ENCODE measurements at regions of chr5 and their contacts with region 1.

Region 1: DNA sequence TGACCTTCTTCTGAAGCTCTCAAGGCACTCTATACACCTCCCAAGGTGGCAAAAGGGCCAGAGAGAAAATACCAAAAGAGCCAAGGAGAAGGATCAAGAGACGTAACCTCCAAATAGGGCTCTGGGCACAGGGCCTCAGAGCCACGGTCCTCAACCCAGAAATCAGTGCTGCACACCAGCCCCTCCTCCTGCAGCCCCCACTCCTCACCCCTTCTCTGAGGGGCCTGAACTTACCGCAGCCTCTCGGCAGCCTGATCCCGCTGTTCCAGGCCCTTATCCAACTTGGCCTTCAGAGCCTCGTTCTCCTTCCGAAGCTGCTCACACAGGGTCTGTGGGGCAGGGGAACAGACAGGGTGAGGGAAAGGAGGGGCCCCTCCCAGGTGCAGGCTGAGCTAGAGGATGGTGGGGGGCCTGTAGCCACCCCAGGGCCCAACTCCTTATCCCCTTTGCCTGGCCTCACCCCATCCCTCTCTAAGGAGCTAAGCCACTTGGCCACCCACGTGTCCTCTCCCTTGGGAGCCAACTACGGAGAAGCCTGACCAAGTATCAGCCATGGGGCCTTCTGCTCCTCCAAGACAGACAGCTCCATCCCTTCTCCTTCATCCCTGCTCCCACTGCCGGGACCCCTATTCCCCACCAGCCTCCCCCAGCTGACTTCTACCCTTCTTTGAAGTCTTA is 28.8 kb downstream of the TNIP1 start:
- DNase-seq: no peak
- H3K4me3 ChIP-seq: no peak overlapping the region
- H3K27ac ChIP-seq: peak overlapping the region in 1 of 2 donors; percentile 44
- H3K4me1 ChIP-seq: no peaks in the 10 kb centered on the region
- H3K27me3 ChIP-seq: no peaks in the 10 kb centered on the region
- CTCF ChIP-seq: no peak
- POLR2A ChIP-seq: no peak

Region 2: GRCh38 chr5:151107738-151108508 is 55.9 kb after region 1 on chr5:
- intact Hi-C with region 1: loop called (anchors 2 kb)
- DNase-seq: peak; percentile 58 to 75
- H3K4me3 ChIP-seq: no peak overlapping the region
- H3K27ac ChIP-seq: peak overlapping the region; percentile 48 to 80
- H3K4me1 ChIP-seq: no peaks in the 10 kb centered on the region
- H3K27me3 ChIP-seq: no peaks in the 10 kb centered on the region
- CTCF ChIP-seq: no peak
- POLR2A ChIP-seq: no peak

Region 3: DNA sequence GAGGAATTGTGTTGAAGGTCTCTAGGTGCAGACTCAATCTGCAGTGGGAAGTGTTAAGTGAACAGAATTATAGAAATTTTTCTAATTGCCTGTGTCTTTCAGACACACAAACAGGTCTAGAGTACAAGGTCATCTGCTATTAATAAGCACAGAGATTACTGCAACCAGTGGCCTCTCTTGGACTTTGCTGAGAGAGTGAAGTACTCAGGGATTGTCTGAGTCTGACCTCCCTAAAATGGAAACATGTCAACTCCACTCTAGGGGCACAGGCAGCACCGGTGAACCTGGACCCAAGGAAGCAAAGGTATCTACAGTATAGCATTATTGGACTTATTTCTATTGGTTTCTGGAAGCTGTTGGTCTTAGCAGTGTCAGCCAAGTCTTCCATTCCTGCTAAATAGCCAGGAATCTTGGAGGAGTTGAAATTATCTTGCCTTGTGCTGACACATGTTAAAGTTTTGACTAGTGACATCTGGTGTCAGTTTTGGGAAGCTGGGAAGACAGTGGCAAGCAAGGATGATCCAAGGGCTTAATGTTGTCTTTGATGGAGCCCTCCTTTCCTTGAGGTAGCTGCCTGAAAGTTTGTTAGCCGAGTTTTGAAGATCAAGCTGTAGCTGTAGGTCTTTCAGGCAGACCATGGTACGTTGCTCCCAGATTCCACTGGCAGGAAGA is 1414.2 kb after region 1 on chr5:
- intact Hi-C with region 1: no loop called
- DNase-seq: no peak
- H3K4me3 ChIP-seq: no peak overlapping the region
- H3K27ac ChIP-seq: no peak overlapping the region
- H3K4me1 ChIP-seq: no peaks in the 10 kb centered on the region
- H3K27me3 ChIP-seq: no peaks in the 10 kb centered on the region
- CTCF ChIP-seq: no peak
- POLR2A ChIP-seq: no peak